Caco-2 (cell line): ENCODE measurements at regions of chr21 and their contacts with region 1.

Region 1: DNA sequence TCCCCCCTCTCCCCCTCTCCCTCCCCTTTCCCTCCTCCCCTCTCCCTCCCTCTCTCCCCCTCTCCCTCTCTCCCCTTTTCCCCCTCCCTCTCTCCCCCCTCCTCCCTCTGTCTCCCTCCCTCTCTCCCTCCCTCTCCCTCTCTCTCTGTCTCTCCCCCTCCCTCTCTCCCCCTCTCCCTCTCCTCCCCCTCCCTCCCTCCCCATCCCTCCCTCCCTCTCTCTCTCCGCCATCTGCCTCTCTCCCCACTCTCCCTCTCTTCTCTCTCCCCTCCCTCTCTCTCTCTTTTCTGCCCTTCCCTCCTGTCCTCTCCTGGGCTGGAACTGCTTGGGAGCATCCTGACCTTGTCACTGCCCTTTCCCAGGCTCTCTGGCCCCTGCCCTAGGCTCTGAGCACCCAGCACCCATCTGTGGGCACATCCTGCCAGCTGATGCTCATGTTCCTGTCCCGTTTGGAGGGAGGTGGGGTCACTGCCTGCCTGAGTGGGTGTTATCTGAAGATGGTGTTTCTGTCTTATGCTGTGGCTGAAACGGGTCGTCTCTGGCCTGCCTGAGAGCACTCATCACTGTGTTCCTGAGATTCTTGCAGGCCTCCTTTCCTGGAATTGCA is 10.8 kb downstream of the FTCD start:
- DNase-seq: no peak
- H3K4me3 ChIP-seq: no peak overlapping the region
- H3K4me3 Mint-ChIP-seq: peak overlapping the region; percentile 82
- H3K27ac Mint-ChIP-seq: peak overlapping the region; percentile 59
- H3K4me1 ChIP-seq: peaks cover 10% of the 10 kb centered on the region; the same call in 1 of the 2 replicates
- H3K4me1 Mint-ChIP-seq: peaks cover 12% of the 10 kb centered on the region
- H3K27me3 ChIP-seq: no peaks in the 10 kb centered on the region
- H3K27me3 Mint-ChIP-seq: no peaks in the 10 kb centered on the region
- CTCF ChIP-seq: no peak

Region 2: DNA sequence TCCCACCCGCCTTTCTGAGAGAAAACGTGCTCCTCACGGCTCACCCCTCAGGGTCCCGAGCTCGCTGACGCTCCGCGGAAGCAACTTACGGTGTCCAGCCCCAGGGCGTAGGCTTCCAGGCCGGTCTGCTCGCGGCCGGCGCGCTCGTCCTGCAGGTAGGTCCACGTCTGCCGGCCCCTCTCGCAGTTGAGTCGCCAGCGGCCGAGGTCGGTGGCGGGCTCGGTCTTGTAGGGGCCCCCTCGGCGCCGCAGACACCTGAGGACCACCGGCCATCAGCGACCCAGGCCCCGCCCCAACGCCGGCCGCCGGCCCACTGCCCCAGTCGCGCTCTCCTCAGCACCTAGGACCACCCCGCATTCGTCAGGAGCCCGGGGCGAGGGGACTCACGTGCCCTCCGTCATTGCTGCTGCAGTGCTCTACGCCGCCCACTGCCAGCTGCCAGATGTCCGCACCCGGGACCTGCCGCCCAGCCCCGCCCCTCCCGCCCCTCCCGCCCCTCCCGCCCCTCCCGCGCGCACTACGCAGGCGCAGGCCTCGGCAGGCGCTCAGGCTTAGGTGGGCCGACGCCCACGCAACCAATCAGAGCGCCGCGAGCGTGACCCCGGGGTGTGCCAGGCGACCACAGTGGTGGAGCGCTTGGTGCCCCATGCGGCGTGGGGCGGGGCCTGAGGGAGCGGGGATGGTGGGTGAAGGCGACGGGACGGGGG is 83.9 kb after region 1 on chr21 and contains the start of gene LSS:
- CTCF ChIA-PET with region 1: interaction called, 4 read pairs
- POLR2A ChIA-PET with region 1: no interaction called
- intact Hi-C with region 1: loop called (anchors 10 kb)
- DNase-seq: peak; percentile 99
- H3K4me3 ChIP-seq: peak within 1 kb of the TSS; percentile 97
- H3K4me3 Mint-ChIP-seq: peak within 1 kb of the TSS; percentile 93
- H3K27ac Mint-ChIP-seq: peak within 1 kb of the TSS; percentile 99
- H3K4me1 ChIP-seq: peaks cover 32% of the 10 kb centered on the region
- H3K4me1 Mint-ChIP-seq: peaks cover 33% of the 10 kb centered on the region
- H3K27me3 ChIP-seq: no peaks in the 10 kb centered on the region
- H3K27me3 Mint-ChIP-seq: no peaks in the 10 kb centered on the region
- CTCF ChIP-seq: no peak
- total RNA-seq, gene LSS: 121 and 127 TPM in 2 replicates

Region 3: DNA sequence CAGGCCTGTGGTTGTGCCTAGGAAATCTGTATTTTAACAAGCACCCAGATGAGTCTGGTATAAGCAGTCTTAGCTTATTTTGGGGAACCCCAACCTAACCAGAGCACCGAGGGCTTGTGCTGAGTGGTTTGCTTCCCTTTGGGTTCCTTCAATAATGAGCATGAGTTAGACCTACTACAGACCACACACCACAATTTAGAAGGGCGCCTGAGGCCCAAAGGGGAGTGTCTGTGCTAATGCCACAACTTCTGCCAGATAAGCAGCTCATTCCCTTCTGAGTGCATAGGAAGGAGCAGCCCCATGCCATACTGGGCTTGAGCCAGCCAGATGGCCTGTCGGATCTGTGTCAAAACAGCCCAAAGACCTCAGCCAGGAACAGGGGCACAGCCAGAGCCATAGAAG is 99.4 kb after region 1 on chr21:
- CTCF ChIA-PET with region 1: no interaction called
- POLR2A ChIA-PET with region 1: no interaction called
- intact Hi-C with region 1: no loop called
- DNase-seq: no peak
- H3K4me3 ChIP-seq: no peak overlapping the region
- H3K4me3 Mint-ChIP-seq: no peak overlapping the region
- H3K27ac Mint-ChIP-seq: no peak overlapping the region
- H3K4me1 ChIP-seq: no peaks in the 10 kb centered on the region
- H3K4me1 Mint-ChIP-seq: peaks cover 5% of the 10 kb centered on the region
- H3K27me3 ChIP-seq: no peaks in the 10 kb centered on the region
- H3K27me3 Mint-ChIP-seq: no peaks in the 10 kb centered on the region
- CTCF ChIP-seq: no peak

Region 4: DNA sequence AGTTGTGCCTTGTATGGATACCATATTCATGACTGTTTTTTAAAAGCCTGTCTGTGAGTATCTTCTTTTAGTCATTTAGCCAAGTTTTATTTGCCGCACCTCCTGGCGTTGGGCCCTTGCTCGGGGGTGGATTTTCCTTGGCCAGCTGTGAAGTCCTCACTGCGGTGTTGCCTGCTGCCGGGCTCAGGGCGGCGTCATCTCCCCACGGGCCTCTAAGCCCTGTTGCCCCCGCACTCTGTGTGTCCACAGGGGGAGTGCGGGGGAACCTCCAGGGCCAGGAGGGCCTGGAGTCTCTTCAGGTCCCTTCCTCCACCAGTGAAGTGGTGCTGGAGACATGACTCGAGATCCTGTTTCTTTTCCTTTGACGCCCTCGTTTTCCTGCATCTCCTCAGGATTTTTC is 248.4 kb after region 1 on chr21:
- CTCF ChIA-PET with region 1: no interaction called
- POLR2A ChIA-PET with region 1: no interaction called
- intact Hi-C with region 1: no loop called
- DNase-seq: no peak
- H3K4me3 ChIP-seq: no peak overlapping the region
- H3K4me3 Mint-ChIP-seq: no peak overlapping the region
- H3K27ac Mint-ChIP-seq: no peak overlapping the region
- H3K4me1 ChIP-seq: no peaks in the 10 kb centered on the region
- H3K4me1 Mint-ChIP-seq: no peaks in the 10 kb centered on the region
- H3K27me3 ChIP-seq: no peaks in the 10 kb centered on the region
- H3K27me3 Mint-ChIP-seq: no peaks in the 10 kb centered on the region
- CTCF ChIP-seq: no peak